ENCODE measurements at regions of chr12 and their contacts with region 1.

Region 1: GRCh38 chr12:53344824-53345485 is 8.8 kb upstream of the SP7 start:
- DNase-seq: peak; percentile 60

Region 2: DNA sequence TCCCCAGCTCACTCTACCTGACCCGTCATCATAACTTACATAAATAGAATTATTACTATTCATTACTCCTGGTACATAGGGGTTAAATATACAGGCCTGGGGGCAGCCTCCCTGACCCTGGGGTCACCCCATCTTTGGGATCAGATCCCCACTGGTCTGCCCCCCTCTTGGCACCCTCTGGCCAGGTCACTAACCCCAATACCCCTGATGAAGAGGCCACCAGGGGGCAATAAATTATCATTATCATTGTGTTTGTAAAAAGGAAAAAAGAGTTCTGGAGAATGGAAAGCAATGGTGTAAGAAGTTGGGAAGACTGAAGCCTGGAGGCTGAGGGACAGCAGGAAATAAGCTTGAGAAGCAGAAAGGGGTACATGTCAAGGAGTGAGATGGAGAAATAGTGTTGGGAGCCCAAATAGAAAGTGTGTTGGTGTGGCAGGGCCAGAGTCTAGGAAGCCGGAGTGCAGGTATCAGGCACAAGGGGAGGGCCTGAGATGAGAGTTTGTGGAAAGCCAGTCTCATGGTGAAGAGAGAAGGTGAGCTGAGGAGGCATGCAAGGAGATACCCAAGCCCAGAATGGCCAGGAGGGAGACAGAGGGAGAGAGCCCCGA is 17.4 kb before region 1 on chr12:
- CTCF ChIA-PET with region 1: interaction called, 48 read pairs
- POLR2A ChIA-PET with region 1: interaction called, 58 read pairs
- DNase-seq: no peak

Region 3: DNA sequence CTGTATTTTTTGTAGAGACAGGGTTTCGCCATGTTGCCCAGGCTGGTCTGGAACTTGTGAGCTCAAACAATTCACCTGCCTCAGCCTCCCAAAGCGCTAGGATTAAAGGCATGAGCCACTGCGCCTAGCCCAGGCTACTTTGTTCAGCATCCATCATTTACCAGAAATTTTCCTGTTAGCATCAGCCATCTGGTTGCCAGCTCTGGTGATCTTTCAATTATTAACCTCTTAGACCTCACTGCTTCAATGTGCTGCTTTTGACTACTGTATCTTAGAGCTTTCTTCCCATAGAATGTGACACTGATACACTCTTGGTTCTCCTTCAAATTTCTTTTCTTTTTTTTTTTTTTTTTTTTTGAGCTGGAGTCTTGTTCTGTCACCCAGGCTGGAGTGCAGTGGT is 73.3 kb after region 1 on chr12:
- CTCF ChIA-PET with region 1: interaction called, 22 read pairs
- POLR2A ChIA-PET with region 1: interaction called, 9 read pairs
- DNase-seq: no peak

Region 4: DNA sequence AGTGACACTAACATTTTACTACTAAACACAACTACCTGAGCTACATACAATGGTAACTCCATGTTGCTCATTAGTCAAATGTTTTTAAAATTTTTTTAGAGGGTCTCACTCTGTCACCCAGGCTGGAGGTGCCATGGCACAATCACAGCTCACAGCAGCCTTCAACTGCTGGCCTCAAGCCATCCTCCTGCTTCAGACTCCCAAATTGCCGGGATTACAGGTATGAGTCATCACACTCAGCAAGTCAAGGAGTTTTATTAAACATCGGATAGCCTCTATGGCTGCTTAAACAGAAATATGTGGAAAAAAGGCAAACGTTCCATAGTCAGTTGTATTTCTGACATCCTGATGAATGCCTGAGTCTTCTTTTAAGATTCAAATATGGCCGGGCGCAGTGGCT is 173.4 kb after region 1 on chr12:
- CTCF ChIA-PET with region 1: no interaction called
- POLR2A ChIA-PET with region 1: no interaction called
- DNase-seq: no peak